Ascending aorta (tissue), 2 donors: ENCODE measurements at regions of chr13 and their contacts with region 1.

Region 1: GRCh38 chr13:110421696-110422385 is 114.8 kb downstream of the COL4A2 start:
- DNase-seq: no peak
- H3K4me3 ChIP-seq: no peak overlapping the region
- H3K27ac ChIP-seq: peak overlapping the region; percentile 90 to 91
- H3K4me1 ChIP-seq: peaks cover 20 to 53% of the 10 kb centered on the region in 2 donors
- H3K27me3 ChIP-seq: no peaks in the 10 kb centered on the region
- CTCF ChIP-seq: no peak

Region 2: GRCh38 chr13:110434629-110435028 is 12.8 kb after region 1 on chr13:
- intact Hi-C with region 1: loop called (anchors 2 kb)
- DNase-seq: no peak
- H3K4me3 ChIP-seq: no peak overlapping the region
- H3K27ac ChIP-seq: peak overlapping the region in 1 of 2 donors; percentile 17
- H3K4me1 ChIP-seq: peaks cover 4 to 15% of the 10 kb centered on the region in 2 donors
- H3K27me3 ChIP-seq: no peaks in the 10 kb centered on the region
- CTCF ChIP-seq: no peak